ENCODE measurements at regions of chr19 and their contacts with region 1.

Region 1: DNA sequence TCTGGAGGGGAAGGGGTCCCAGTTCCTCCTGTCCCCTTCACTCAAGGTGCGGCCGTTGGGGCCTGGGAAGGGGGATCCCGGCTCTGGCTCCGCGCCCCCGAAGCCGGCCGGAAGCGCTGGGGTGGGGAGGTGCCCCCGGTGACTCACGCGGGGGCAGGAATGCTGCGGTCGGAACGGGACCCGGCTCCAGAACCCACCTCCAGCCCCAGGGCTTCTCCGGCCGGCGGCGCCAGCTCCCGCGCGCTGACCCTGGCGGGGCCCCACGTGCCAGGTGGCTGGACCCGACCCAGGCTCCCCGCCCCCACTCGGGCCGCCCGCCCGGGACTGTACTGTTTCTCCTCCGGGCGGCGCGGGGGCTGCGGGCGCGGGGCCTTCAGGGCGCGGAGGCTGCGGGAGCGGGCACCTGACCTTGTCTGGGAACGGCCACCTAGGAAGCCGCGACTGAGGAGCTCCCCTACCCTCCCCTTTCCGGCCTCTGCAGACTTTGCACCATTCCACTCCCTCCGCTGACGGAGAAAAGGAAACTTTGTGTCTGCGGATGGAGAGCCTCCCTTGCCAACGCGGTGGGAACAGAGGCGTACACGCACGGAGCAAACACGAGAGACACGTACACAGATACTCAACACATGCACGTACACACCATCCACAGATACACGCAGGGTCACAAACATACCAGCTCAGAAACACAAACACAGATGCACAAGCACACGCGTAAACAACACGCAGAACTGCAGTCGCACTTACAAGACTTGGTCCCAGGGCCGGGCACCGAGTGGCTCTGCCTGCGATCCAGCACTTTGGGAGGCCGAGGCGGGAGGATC is 7.2 kb downstream of the AXL start:
- DNase-seq: peak; percentile 69
- H3K4me3 Mint-ChIP-seq: peak overlapping the region; percentile 85
- H3K27ac Mint-ChIP-seq: peak overlapping the region; percentile 81
- H3K4me1 Mint-ChIP-seq: peaks cover 16% of the 10 kb centered on the region
- H3K27me3 Mint-ChIP-seq: peaks cover 3% of the 10 kb centered on the region

Region 2: DNA sequence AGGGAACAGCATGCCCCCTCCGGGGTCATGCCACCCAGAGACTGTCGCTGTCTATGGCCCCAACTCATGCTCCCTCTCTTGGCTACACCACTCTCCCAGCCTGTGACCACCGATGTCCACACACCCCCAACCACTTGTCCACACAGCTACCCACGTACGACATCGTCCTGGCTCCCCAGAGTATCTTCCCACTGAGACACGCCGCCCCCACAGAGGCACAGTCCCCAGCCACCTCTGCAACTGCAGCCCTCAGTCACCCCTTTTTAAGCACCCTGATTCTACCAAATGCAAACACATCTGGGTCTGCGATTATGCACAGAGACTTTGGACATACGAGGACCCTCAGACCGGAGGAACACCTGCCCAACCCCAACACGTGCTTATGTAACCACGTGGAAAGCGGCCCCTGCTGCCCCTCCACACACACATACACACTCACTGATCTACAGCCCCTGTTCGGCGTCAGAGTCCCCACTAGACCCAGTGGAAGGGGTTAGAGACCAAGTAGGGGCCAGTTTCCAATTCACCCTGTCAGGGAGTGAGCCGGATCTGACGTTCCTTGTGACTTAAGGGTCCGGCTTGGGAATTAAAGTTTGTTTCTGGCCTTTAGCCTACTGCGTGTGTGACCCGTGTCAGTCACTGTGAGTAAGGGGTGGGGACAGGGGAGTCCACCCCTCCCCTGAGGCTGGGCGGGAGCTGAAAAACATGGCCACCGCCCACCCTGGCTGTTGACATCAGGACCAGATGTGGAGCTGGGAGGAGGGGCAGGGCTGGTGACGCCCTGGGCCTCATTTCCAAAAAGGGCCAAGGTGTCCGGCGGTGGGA is 19.1 kb before region 1 on chr19:
- CTCF ChIA-PET with region 1: interaction called, 5 read pairs
- POLR2A ChIA-PET with region 1: no interaction called
- intact Hi-C with region 1: loop called (anchors 2 kb)
- DNase-seq: no peak
- H3K4me3 Mint-ChIP-seq: no peak overlapping the region
- H3K27ac Mint-ChIP-seq: no peak overlapping the region
- H3K4me1 Mint-ChIP-seq: peaks cover 11% of the 10 kb centered on the region
- H3K27me3 Mint-ChIP-seq: peaks cover 2% of the 10 kb centered on the region